SK-N-SH (cell line): ENCODE measurements at regions of chr1 and their contacts with region 1.

Region 1: DNA sequence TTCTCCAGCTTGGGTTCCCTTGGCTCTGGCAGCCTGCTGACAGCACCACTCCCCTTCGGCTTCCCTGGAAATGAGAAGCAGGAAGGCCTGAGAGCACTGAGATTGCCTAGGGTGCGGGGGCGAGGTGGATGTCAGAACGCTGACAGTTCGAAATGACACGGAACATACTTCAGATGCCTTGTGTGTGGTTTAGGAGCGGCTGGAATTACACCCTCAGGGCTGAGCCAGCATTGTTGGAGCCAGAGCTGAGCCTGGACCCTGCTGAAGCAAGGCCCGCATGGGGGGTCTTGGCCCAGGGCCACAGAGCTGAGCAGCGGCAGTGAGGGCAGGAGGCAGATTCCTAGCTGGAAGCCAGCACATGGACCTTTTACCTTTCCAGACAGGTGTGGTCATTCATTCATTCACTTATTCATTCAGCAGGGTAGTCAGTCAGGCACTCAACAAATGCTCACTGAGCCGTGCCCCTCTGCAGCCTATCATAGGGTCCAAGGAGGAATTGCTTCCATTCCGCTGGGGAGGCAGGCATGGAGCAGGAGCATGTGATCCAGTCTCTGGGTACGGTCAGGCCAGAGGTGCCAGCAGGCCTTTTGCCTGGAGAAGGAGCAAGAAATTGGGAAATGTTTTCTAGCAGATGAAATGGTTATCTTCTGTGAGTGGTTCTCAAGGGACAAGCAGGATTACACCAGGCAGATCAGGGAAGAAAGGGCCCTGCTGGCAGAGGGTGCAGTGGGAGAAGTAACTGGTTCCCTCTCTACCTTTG is 6.6 kb upstream of the FOXE3 start:
- DNase-seq: no peak
- H3K4me3 ChIP-seq: no peak overlapping the region
- H3K27ac ChIP-seq: no peak overlapping the region
- H3K4me1 ChIP-seq: no peaks in the 10 kb centered on the region
- H3K27me3 ChIP-seq: no peaks in the 10 kb centered on the region
- CTCF ChIP-seq: no peak
- EP300 ChIP-seq: no peak
- RAD21 ChIP-seq: no peak

Region 2: GRCh38 chr1:47147047-47147785 is 262.3 kb before region 1 on chr1:
- CTCF ChIA-PET with region 1: no interaction called
- POLR2A ChIA-PET with region 1: no interaction called
- DNase-seq: no peak
- H3K4me3 ChIP-seq: no peak overlapping the region
- H3K27ac ChIP-seq: no peak overlapping the region
- H3K4me1 ChIP-seq: no peaks in the 10 kb centered on the region
- H3K27me3 ChIP-seq: no peaks in the 10 kb centered on the region
- CTCF ChIP-seq: no peak
- EP300 ChIP-seq: no peak
- RAD21 ChIP-seq: no peak

Region 3: DNA sequence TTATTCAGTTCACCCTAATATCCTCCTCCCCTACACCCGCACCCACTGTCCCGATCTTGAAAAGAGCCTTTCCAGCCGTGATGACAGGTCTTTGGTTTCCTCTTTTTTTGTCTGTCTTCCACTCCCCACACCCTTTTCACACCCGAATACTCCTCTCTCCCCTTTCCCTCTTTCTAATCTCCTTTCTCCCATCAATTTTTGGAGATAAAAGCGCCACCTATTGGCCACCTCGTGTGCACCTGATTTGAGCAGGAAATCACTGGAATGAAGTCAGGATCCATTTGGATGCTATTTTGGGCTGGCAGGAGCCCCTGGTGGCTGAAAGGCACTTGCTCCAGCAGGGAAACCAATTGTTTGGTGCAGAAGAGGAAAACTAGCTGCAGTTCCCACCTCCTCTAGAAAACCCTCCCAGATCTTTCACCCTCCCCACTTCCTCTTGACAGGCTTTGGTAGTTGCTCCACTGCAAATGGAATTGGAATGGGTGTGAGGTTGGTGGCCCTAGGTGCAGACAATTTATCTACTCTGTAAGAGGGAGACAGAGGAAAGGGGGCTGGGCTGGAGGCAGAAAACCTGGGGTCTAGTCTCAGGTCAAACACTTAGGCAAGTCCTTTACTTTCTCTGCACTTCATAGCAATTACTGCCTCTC is 15.0 kb after region 1 on chr1:
- CTCF ChIA-PET with region 1: interaction called, 15 read pairs
- POLR2A ChIA-PET with region 1: no interaction called
- DNase-seq: peak; percentile 65
- H3K4me3 ChIP-seq: no peak overlapping the region
- H3K27ac ChIP-seq: no peak overlapping the region
- H3K4me1 ChIP-seq: no peaks in the 10 kb centered on the region
- H3K27me3 ChIP-seq: peaks cover 18% of the 10 kb centered on the region; the same call in 1 of the 2 replicates
- CTCF ChIP-seq: peak; percentile 81
- EP300 ChIP-seq: no peak
- RAD21 ChIP-seq: peak; percentile 61